ENCODE measurements at regions of chr20 and their contacts with region 1.

Region 1: DNA sequence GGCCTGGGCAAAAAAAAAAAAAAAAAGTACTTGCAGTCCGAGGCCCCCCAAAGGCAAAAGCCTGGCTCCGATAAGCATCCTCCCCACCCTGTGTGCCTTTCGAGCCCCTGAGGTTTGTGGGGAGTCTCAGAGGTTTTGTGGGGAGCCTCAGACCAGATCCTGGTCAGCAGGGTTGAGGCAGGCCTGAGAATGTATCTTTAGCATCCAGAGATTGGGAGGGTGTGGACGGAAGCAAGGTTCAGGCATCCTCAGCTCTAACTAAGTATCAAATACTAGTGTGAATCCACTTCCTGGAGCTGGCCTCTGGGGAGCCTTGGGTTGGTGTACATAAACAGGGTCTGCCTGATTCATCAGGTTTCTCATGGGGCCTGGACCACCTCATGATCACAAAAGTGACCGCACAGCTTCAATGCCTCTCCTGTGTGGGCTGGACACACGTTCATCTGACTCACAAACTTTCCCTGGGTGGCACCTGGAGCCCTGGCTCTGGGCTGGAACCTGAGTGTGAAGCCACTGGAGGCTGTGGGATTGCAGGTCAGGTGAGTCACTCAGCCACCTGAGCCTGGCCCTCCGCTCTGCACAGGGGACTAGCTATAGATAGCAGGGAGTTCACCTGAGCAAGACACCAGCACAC is 24.4 kb downstream of the PCMTD2 start:
- DNase-seq: peak; percentile 49
- ATAC-seq: peak; percentile 63
- H3K4me3 Mint-ChIP-seq: no peak overlapping the region
- H3K27ac Mint-ChIP-seq: no peak overlapping the region
- H3K4me1 Mint-ChIP-seq: peaks cover 21% of the 10 kb centered on the region
- H3K27me3 Mint-ChIP-seq: peaks cover 14% of the 10 kb centered on the region

Region 2: DNA sequence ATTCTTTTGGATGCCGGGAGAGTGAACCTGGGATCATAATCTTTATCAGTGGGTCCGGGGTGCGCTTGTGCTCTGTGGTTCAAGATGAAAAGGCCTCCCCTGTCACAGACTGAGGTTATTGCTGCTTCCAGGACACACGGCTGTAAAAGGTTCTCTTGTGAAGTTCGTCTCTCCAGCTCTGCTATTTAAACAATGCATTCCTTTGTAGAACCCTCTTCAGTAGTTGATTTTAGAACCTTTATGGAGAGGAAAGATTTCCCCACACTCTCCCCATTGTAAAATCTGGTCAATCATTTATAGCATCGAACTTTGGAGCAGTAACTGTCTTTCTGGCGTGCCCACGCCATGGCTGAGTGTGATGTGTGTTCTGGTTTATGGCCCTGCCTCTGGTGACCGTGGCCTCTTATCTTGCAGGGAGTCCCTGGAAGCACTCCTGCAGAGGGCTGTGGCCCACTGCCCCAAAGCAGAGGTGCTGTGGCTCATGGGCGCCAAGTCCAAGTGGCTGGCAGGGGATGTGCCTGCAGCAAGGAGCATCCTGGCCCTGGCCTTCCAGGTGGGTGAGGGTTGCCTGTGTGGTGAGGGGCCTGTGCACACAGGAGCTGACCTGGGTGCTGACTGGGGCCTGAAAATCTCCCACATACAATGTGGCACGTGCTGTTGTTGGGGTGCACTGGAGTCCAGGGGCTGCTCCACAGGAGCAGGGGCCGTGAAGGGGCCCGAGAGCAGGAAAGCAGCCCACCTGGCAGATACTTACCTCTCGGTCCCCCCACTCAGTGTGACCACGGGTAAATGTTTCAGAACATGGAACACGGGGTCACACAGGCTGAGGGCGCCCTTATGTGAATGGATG is 255.6 kb before region 1 on chr20:
- CTCF ChIA-PET with region 1: no interaction called
- POLR2A ChIA-PET with region 1: no interaction called
- DNase-seq: no peak
- ATAC-seq: no peak
- H3K4me3 Mint-ChIP-seq: no peak overlapping the region
- H3K27ac Mint-ChIP-seq: no peak overlapping the region
- H3K4me1 Mint-ChIP-seq: peaks cover 3% of the 10 kb centered on the region
- H3K27me3 Mint-ChIP-seq: no peaks in the 10 kb centered on the region

Region 3: DNA sequence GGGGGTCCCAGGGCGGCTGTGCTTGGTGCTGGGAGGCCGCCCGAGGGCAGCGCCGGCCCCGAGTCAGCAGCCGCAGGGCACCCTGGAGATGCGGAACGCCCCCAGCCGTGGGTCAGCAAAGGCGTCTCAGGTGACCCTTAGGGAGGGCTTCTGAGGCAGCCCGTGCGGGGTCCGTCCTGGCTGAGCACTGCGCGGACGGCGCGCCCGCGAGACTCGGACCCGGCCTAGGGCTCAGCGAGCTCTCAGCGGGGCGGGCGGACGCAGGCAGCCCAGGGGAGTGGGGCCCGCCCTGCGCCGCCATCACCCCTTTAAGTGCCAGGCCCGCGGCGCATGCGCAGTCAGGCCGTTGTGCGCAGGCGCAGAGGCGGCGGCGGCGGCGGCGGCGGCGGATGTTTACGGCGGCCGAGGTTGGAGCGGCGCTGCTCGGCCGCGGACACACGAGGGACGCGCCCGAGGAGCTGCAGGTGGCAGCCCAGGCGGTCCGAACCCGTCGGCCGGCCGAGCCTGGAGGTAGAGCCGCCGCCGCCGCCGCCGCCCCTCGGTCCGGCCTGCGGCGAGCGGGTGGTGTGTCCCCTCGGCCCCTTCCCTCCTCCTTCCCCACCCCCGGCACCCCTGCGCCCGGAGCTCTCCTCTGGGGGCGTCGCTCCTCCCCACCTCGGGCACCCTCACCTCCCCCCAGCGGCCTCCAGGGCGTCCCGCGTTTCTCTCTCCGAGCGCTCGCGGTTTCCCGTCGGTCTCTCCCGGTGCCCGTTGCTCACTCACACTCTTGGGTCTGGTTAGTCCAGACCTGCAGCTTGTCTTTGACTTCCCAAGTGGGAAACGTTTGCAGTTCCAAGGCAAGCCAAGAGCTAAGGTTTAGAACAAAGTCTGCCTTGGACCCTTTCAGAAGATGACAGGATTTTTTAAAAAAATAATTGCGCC is 24.3 kb before region 1 on chr20 and contains the start of gene PCMTD2:
- CTCF ChIA-PET with region 1: interaction called, 32 read pairs
- POLR2A ChIA-PET with region 1: no interaction called
- DNase-seq: peak; percentile 89
- ATAC-seq: peak; percentile 93
- H3K4me3 Mint-ChIP-seq: peak within 1 kb of the TSS; percentile 82
- H3K27ac Mint-ChIP-seq: peak within 1 kb of the TSS; percentile 84
- H3K4me1 Mint-ChIP-seq: peaks cover 32% of the 10 kb centered on the region
- H3K27me3 Mint-ChIP-seq: peaks cover 8% of the 10 kb centered on the region
- total RNA-seq, gene PCMTD2: 32.0 to 33.2 TPM

Measured in activated CD8-positive, alpha-beta T cell treated with anti-CD3 and anti-CD28 coated beads, Interleukin-2, amount 10 ng/mL, durations not matched to agents 7 days and 5 days (primary cell).